ENCODE measurements at regions of chr6 and their contacts with region 1.

Region 1: GRCh38 chr6:30717042-30717844 is at the start of gene MDC1:
- DNase-seq: peak; percentile 100
- ATAC-seq: peak; percentile 88 to 92
- H3K4me3 ChIP-seq: peak within 1 kb of the TSS; percentile 91
- H3K27ac ChIP-seq: peak within 1 kb of the TSS; percentile 98
- H3K4me1 ChIP-seq: peaks cover 3% of the 10 kb centered on the region
- H3K27me3 ChIP-seq: no peaks in the 10 kb centered on the region
- total RNA-seq, gene MDC1: 20.7 to 26.6 (median 24.2) TPM

Region 2: DNA sequence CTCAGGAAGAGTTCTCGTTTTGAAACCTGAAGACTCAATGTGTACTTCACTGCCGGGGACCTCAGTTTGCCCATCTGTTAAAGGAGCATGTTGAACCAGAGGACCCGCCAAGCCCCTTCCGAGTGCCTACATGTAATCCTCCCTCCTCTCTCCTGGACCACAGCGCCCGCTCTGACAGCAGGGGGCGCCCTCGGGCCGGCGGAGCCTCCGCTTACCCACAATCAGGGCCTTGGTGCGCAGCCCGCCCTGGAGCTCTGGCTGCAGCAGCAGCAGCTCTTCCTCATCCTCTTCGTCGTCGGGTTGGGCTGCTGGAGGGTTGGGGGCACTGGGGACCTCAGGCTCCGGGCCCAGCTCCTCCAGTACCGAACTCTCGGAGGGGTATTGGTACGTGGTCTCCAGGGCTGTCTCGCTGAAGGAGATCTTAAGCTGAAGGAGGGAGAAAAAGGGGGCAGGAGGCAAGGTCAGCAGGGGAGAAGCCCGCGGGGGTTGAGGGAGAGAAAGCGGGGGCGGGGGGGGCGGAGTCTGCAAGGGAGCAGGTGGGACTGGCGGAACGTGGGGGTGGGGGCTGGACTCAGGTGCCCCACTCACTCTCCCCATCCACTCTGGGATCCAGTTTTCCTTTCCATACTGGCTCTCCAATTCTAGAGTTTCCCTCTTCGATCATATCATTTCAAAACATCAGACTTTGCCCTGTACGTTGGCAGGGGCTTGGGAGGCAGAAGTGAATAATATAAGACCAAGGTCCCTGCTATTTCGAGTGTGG is 38.1 kb before region 1 on chr6:
- intact Hi-C with region 1: loop called (anchors 1 to 2 kb)
- DNase-seq: peak; percentile 87 to 96 (median 96)
- ATAC-seq: peak; percentile 65 to 80
- H3K4me3 ChIP-seq: no peak overlapping the region
- H3K27ac ChIP-seq: peak overlapping the region; percentile 29
- H3K4me1 ChIP-seq: peaks cover 5% of the 10 kb centered on the region
- H3K27me3 ChIP-seq: no peaks in the 10 kb centered on the region

Region 3: DNA sequence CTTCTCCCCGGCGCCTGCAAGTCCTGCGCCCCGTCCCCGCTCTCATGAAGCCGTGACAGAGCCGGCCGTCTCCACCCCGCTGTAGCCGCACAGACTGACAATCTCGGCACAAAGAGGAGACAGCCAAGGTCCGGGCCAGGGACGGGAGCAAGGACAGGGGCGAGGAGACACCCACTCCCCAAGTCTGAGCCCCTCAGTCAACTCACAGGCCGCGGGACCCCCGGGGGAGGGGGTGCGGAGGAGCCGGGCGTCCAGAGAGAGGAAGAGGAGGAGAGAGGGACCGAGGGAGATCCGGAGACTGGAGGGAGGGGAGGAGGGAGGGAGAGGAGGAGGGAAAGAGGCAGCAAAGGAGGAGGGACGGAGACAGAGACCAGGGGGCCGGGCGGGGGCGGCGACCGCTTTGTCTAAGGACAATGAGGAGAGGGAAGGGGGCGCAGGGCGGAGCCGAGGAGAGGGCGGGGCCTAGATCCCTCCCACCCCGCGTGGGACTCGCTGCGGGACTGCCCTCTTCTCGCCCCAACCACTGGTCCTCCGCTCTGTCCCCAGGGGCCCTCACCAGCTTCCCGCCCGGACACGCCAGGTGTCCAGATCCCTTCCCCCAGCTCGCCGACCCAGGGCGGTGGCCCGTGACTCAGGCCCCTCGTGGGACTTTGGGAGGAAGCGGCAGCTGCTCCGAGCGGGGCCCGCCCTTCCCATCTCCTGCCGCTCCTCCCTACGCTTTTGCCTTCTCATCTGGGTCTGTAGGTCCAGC is 30.2 kb before region 1 on chr6:
- intact Hi-C with region 1: loop called in 3 of 4 experiments (anchors 2 kb)
- DNase-seq: peak; percentile 99
- ATAC-seq: peak; percentile 84
- H3K4me3 ChIP-seq: peak overlapping the region; percentile 88
- H3K27ac ChIP-seq: peak overlapping the region; percentile 99
- H3K4me1 ChIP-seq: peaks cover 8% of the 10 kb centered on the region
- H3K27me3 ChIP-seq: no peaks in the 10 kb centered on the region

Region 4: GRCh38 chr6:30883685-30884520 is 166.7 kb after region 1 on chr6 and contains the start of gene DDR1:
- intact Hi-C with region 1: no loop called
- DNase-seq: peak; percentile 79 to 95 (median 94)
- ATAC-seq: peak; percentile 75 to 82
- H3K4me3 ChIP-seq: peak within 1 kb of the TSS; percentile 92
- H3K27ac ChIP-seq: peak within 1 kb of the TSS; percentile 78
- H3K4me1 ChIP-seq: peaks cover 22% of the 10 kb centered on the region
- H3K27me3 ChIP-seq: no peaks in the 10 kb centered on the region
- total RNA-seq, gene DDR1: 96.2 to 120 (median 100) TPM

Measured in right cardiac atrium (tissue), 5 donors.